Caco-2 (cell line): ENCODE measurements at regions of chr20 and their contacts with region 1.

Region 1: GRCh38 chr20:23161968-23162696 is 76.0 kb upstream of the CD93 start:
- DNase-seq: no peak
- H3K4me3 ChIP-seq: no peak overlapping the region
- H3K4me3 Mint-ChIP-seq: no peak overlapping the region
- H3K27ac Mint-ChIP-seq: no peak overlapping the region
- H3K4me1 ChIP-seq: peaks cover 23% of the 10 kb centered on the region
- H3K4me1 Mint-ChIP-seq: peaks cover 32% of the 10 kb centered on the region
- H3K27me3 ChIP-seq: no peaks in the 10 kb centered on the region
- H3K27me3 Mint-ChIP-seq: no peaks in the 10 kb centered on the region
- CTCF ChIP-seq: no peak

Region 2: DNA sequence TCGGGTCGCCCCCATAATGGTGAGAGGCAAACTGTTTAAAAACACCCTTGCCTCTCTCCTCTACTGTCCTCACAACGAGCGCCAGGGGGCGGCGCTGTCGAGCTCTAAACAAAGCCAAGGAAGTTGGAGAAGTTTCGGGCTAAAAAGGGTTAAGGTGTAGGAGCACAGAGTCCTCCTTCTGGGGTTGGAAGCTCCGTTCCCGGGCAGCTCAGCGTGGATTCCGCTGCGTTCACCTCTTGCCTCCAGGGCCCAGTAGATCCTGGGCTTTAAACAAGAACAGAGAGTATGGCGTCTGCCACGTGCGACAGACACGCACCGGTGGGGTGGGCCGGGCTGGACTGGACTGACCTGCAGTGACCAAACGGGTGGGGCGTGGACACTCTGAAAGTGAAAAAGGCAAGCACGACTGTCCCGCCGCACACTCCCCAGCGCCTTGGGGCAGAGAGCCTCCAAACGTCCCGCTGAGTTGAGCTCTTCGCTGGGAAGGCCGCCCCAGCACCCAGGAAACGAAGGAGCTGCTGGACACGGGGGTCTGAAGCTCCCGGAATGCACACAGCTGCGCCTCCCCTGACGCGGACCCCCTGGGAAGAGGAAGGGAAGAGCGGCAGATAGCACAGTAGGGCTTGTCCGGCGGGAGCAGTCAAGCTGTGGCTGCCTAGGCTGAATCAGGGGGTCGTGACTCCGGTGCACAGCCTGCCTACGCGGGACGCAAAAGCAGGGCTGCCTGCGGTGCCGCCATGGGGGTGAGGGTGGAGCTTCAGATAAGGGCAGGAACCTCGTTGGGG is 111.1 kb before region 1 on chr20:
- CTCF ChIA-PET with region 1: no interaction called
- POLR2A ChIA-PET with region 1: no interaction called
- intact Hi-C with region 1: loop called (anchors 10 kb)
- DNase-seq: peak; percentile 78 to 82
- H3K4me3 ChIP-seq: peak overlapping the region; percentile 45
- H3K4me3 Mint-ChIP-seq: peak overlapping the region; percentile 85
- H3K27ac Mint-ChIP-seq: peak overlapping the region; percentile 97
- H3K4me1 ChIP-seq: peaks cover 30% of the 10 kb centered on the region
- H3K4me1 Mint-ChIP-seq: peaks cover 32% of the 10 kb centered on the region
- H3K27me3 ChIP-seq: no peaks in the 10 kb centered on the region
- H3K27me3 Mint-ChIP-seq: no peaks in the 10 kb centered on the region
- CTCF ChIP-seq: peak; percentile 46 to 65

Region 3: GRCh38 chr20:23099791-23100698 is 62.1 kb before region 1 on chr20:
- CTCF ChIA-PET with region 1: no interaction called
- POLR2A ChIA-PET with region 1: no interaction called
- intact Hi-C with region 1: no loop called
- DNase-seq: peak in 1 of 2 experiments; percentile 38
- H3K4me3 ChIP-seq: no peak overlapping the region
- H3K4me3 Mint-ChIP-seq: no peak overlapping the region
- H3K27ac Mint-ChIP-seq: no peak overlapping the region
- H3K4me1 ChIP-seq: no peaks in the 10 kb centered on the region
- H3K4me1 Mint-ChIP-seq: peaks cover 7% of the 10 kb centered on the region
- H3K27me3 ChIP-seq: no peaks in the 10 kb centered on the region
- H3K27me3 Mint-ChIP-seq: no peaks in the 10 kb centered on the region
- CTCF ChIP-seq: no peak

Region 4: DNA sequence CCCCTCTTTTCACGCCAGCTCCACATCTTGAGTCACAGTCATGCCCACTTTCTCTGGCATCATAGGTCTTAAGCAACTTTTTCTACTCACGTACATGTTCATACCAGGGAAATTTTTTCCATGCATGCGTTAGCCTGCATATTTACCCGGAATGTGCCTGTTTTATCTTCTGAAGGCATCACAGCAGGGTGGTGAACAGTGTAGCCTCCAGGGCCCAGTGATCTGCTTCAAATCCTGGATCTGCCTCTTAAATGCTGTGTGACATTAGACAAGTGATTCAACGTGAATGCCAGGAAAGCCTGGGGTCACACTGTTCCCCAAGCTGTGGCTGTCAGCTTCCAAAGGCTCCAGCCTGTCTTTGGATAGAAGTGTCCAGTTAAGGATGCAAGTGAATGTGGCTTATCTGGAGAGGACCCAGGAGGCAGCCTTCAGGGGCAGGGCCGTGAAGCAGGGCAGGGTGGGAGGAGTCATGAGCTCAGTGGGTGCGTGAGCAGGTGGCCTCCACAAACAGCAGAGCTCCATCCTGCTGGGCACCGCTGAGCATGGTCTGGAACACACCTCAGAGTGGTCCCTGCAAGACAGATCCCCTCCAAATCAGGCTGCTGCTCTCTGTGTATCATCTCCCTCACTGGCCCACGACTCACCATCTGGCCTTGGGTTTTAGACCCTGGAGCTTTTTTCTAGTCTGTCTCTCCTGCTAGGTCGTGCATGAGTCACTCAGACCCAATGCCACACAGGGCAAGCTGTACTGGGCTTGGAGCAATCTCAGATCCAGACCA is 45.6 kb before region 1 on chr20:
- CTCF ChIA-PET with region 1: no interaction called
- POLR2A ChIA-PET with region 1: no interaction called
- intact Hi-C with region 1: loop called (anchors 10 kb)
- DNase-seq: no peak
- H3K4me3 ChIP-seq: no peak overlapping the region
- H3K4me3 Mint-ChIP-seq: no peak overlapping the region
- H3K27ac Mint-ChIP-seq: no peak overlapping the region
- H3K4me1 ChIP-seq: no peaks in the 10 kb centered on the region
- H3K4me1 Mint-ChIP-seq: no peaks in the 10 kb centered on the region
- H3K27me3 ChIP-seq: no peaks in the 10 kb centered on the region
- H3K27me3 Mint-ChIP-seq: no peaks in the 10 kb centered on the region
- CTCF ChIP-seq: no peak

Region 5: DNA sequence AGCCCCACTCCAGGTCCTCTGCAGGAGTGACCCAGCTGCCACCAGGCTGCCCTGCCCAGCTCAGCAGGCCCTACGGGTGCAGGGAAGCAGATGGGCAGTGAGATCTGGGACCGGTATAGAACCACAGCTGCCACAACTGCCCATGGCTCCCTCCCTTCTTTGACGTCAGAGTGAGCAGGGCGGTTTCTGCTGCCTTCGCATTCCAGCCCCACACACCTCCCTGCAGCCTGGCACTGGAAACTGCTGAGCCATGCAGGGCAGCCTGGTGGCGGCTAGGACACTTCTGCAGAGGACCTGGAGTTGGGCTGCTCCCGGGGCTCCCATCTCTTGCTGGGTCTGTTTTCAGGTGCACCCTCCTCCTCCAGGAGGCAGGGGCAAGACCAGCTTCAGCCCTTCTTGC is 25.6 kb after region 1 on chr20:
- CTCF ChIA-PET with region 1: no interaction called
- POLR2A ChIA-PET with region 1: no interaction called
- intact Hi-C with region 1: no loop called
- DNase-seq: no peak
- H3K4me3 ChIP-seq: no peak overlapping the region
- H3K4me3 Mint-ChIP-seq: no peak overlapping the region
- H3K27ac Mint-ChIP-seq: no peak overlapping the region
- H3K4me1 ChIP-seq: no peaks in the 10 kb centered on the region
- H3K4me1 Mint-ChIP-seq: no peaks in the 10 kb centered on the region
- H3K27me3 ChIP-seq: no peaks in the 10 kb centered on the region
- H3K27me3 Mint-ChIP-seq: no peaks in the 10 kb centered on the region
- CTCF ChIP-seq: no peak